MCF 10A (cell line): ENCODE measurements at regions of chr18 and their contacts with region 1.

Region 1: GRCh38 chr18:47204908-47205522 is 28.9 kb upstream of the IER3IP1 start:
- DNase-seq: peak; percentile 61
- H3K4me3 Mint-ChIP-seq: no peak overlapping the region
- H3K27ac Mint-ChIP-seq: no peak overlapping the region
- H3K4me1 Mint-ChIP-seq: no peaks in the 10 kb centered on the region
- H3K27me3 Mint-ChIP-seq: peaks cover 62% of the 10 kb centered on the region
- CTCF ChIP-seq: peak; percentile 86

Region 2: DNA sequence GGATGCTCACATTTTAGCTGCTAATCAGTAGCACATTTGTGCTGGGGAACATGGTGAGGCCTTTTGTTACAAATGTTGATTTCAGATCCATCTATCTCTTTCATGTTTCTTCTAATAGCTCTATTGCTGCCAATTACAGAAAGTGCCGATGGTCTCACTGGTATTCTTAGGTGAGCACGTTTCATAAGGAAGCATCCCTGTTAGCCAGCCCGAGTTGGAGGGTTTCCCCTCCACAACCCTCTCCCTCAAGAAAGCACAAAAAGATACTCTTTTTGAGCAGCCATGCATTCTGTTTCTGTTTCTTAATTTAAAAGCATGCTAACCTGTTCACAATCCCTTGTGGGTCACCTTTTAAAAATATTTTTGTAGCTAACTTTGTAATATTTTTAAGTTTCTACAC is 417.3 kb before region 1 on chr18:
- CTCF ChIA-PET with region 1: no interaction called
- POLR2A ChIA-PET with region 1: no interaction called
- intact Hi-C with region 1: no loop called
- DNase-seq: no peak
- H3K4me3 Mint-ChIP-seq: no peak overlapping the region
- H3K27ac Mint-ChIP-seq: no peak overlapping the region
- H3K4me1 Mint-ChIP-seq: no peaks in the 10 kb centered on the region
- H3K27me3 Mint-ChIP-seq: no peaks in the 10 kb centered on the region
- CTCF ChIP-seq: no peak

Region 3: DNA sequence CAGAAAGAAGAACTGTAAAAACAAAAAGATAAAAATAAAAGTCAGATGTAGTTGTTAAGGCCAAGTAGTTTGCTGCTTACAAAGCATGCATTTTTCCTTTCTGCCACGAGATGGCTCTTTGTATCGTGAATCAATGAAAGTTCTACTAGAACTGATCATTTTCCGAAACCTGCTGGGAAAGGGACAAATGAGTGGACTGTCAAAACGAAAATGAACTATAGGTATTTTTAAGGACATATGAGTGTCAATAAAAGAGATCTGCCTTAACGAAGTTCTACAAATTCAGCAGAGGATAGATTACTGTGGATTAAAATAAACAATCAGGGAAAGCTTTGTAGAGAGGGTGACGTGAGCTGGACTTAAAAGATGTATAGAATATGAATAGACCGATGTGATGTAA is 154.5 kb before region 1 on chr18:
- CTCF ChIA-PET with region 1: interaction called, 88 read pairs
- POLR2A ChIA-PET with region 1: interaction called, 4 read pairs
- intact Hi-C with region 1: loop called (anchors 1 kb)
- DNase-seq: peak; percentile 60
- H3K4me3 Mint-ChIP-seq: no peak overlapping the region
- H3K27ac Mint-ChIP-seq: no peak overlapping the region
- H3K4me1 Mint-ChIP-seq: peaks cover 5% of the 10 kb centered on the region
- H3K27me3 Mint-ChIP-seq: peaks cover 14% of the 10 kb centered on the region
- CTCF ChIP-seq: peak; percentile 71

Region 4: DNA sequence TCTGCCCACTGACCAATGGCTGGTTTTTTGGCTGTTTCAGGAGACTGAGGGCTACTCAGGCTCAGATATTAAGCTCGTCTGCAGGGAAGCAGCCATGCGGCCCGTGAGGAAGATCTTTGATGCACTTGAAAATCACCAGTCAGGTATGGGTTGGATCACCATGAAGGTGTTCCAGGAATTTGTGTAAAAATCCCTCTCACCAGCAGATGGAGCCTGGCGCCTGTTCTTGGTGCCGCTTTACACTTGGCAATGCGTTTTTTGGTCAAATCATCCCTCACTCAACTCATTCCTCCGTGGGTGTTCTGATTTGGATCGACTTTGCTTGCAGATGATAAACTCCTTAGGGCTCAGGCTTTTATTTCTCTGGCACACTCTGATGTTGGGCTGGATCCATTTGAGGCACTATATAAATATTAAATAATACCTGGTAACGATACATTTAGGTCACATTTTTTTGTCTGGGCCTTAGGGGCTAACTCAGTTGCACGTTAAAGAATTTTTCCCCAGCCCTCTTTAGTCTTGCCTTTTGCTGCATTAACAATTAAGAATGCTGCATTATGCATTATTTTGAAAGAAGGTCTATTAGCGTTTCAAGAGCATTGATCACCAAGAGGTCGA is 104.7 kb before region 1 on chr18:
- CTCF ChIA-PET with region 1: interaction called, 164 read pairs
- POLR2A ChIA-PET with region 1: no interaction called
- intact Hi-C with region 1: loop called (anchors 1 kb)
- DNase-seq: peak; percentile 65
- H3K4me3 Mint-ChIP-seq: no peak overlapping the region
- H3K27ac Mint-ChIP-seq: no peak overlapping the region
- H3K4me1 Mint-ChIP-seq: no peaks in the 10 kb centered on the region
- H3K27me3 Mint-ChIP-seq: no peaks in the 10 kb centered on the region
- CTCF ChIP-seq: peak; percentile 82

Region 5: GRCh38 chr18:47150029-47150823 is 54.8 kb before region 1 on chr18 and contains the start of gene HDHD2:
- CTCF ChIA-PET with region 1: interaction called, 22 read pairs
- POLR2A ChIA-PET with region 1: interaction called, 5 read pairs
- intact Hi-C with region 1: no loop called
- DNase-seq: peak; percentile 76
- H3K4me3 Mint-ChIP-seq: peak within 1 kb of the TSS; percentile 96
- H3K27ac Mint-ChIP-seq: peak within 1 kb of the TSS; percentile 98
- H3K4me1 Mint-ChIP-seq: peaks cover 33% of the 10 kb centered on the region
- H3K27me3 Mint-ChIP-seq: no peaks in the 10 kb centered on the region
- CTCF ChIP-seq: no peak
- total RNA-seq, gene HDHD2: 32.6 and 48.0 TPM in 2 replicates

Region 6: GRCh38 chr18:47215554-47216138 is 10.6 kb after region 1 on chr18:
- CTCF ChIA-PET with region 1: interaction called, 37 read pairs
- POLR2A ChIA-PET with region 1: interaction called, 3 read pairs
- intact Hi-C with region 1: no loop called
- DNase-seq: peak; percentile 61
- H3K4me3 Mint-ChIP-seq: no peak overlapping the region
- H3K27ac Mint-ChIP-seq: no peak overlapping the region
- H3K4me1 Mint-ChIP-seq: no peaks in the 10 kb centered on the region
- H3K27me3 Mint-ChIP-seq: peaks cover 82% of the 10 kb centered on the region
- CTCF ChIP-seq: peak; percentile 59

Region 7: GRCh38 chr18:48419277-48420022 is 1214.4 kb after region 1 on chr18:
- CTCF ChIA-PET with region 1: no interaction called
- POLR2A ChIA-PET with region 1: no interaction called
- intact Hi-C with region 1: no loop called
- DNase-seq: no peak
- H3K4me3 Mint-ChIP-seq: no peak overlapping the region
- H3K27ac Mint-ChIP-seq: no peak overlapping the region
- H3K4me1 Mint-ChIP-seq: peaks cover 6% of the 10 kb centered on the region
- H3K27me3 Mint-ChIP-seq: peaks cover 47% of the 10 kb centered on the region
- CTCF ChIP-seq: no peak